ENCODE measurements at regions of chr15 and their contacts with region 1.

Region 1: DNA sequence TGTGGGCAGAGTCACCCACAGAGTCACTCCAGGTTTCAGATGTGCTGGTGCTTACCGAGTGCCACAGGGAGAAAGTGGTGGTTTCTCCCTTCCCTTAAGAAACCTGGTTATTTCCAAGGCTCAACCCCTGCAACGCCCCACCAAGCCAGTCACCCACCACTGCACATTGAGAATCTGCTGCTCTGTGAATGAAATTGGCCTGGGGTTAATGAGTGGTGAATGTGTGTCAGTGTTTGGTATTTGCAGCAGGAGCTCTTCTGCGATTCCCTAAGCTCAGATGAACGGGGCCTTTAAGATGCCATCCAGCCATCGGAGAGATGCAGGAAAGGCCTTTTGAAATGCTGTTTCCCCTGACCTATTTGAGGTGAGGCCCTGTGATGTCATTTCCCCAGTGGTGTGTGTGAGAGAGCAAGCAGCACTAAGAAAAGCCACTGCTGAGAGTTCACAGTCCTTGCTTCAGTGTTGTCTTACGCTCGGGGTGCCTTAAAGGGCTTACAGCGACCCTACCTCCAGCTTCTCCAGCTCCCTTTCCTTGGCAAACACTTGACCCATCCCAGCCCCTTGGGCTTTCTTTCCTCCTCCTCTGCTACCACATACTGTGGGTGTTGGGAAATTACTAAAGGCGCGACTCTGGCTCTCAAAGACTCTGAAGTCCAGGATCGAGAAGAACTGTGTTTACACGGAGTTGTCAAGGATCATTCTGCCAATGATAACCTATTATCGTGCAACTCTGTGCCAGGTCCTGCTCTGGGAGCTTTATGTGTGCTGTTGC is 68.9 kb downstream of the SMAD3 start:
- DNase-seq: peak; percentile 86
- ATAC-seq: peak; percentile 97
- H3K4me3 Mint-ChIP-seq: peak overlapping the region; percentile 78
- H3K27ac Mint-ChIP-seq: peak overlapping the region; percentile 97
- H3K4me1 Mint-ChIP-seq: peaks cover 90% of the 10 kb centered on the region
- H3K27me3 Mint-ChIP-seq: no peaks in the 10 kb centered on the region

Region 2: GRCh38 chr15:67085818-67086636 is 48.2 kb before region 1 on chr15:
- CTCF ChIA-PET with region 1: no interaction called
- POLR2A ChIA-PET with region 1: interaction called, 10 read pairs
- DNase-seq: peak; percentile 58
- ATAC-seq: peak; percentile 59
- H3K4me3 Mint-ChIP-seq: peak overlapping the region; percentile 49
- H3K27ac Mint-ChIP-seq: peak overlapping the region; percentile 74
- H3K4me1 Mint-ChIP-seq: peaks cover 98% of the 10 kb centered on the region
- H3K27me3 Mint-ChIP-seq: peaks cover 2% of the 10 kb centered on the region

Region 3: GRCh38 chr15:67096546-67097294 is 37.5 kb before region 1 on chr15:
- CTCF ChIA-PET with region 1: interaction called, 6 read pairs
- POLR2A ChIA-PET with region 1: interaction called, 23 read pairs
- DNase-seq: no peak
- ATAC-seq: no peak
- H3K4me3 Mint-ChIP-seq: no peak overlapping the region
- H3K27ac Mint-ChIP-seq: peak overlapping the region; percentile 54
- H3K4me1 Mint-ChIP-seq: peaks cover 82% of the 10 kb centered on the region
- H3K27me3 Mint-ChIP-seq: no peaks in the 10 kb centered on the region

Region 4: DNA sequence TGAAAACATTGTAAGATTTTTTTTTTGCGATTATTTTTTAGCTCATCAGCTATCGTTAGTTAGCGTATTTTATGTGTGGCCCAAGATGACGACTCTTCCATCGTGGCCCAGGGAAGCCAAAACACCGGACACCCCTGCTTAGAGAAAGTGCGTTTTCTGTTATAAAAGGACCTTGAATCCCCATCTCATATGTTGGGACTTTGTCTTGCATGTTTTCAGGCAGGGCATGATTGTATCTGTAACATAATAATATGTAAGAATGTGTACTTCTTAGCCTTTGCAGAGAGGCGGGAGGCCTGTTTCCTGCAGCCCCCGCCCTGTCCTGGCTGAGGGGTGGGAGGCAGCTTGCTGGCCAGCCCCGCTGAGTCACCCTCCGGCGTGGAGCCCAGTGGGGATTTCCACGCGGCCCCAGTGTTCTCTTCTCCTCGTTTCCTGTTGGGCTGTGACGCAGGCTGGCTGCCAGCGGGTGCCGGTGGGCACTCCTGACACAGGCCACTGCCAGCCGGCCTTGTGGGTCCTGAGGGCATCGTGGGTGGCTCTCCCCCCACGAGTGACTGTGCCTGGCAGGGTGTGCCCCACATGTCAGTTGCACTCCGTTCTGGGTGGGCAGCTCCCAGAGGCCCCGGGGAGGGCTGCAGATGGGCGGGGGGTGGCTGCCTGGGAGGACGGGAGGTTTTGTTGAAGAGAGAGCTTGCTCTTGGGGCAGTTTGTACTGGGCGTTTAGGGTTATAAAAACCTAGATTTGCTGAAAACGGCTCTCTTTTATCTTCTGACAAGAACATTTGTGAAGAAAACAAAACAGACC is 13.2 kb before region 1 on chr15:
- CTCF ChIA-PET with region 1: interaction called, 9 read pairs
- POLR2A ChIA-PET with region 1: interaction called, 28 read pairs
- DNase-seq: peak; percentile 82
- ATAC-seq: peak; percentile 93
- H3K4me3 Mint-ChIP-seq: peak overlapping the region; percentile 58
- H3K27ac Mint-ChIP-seq: peak overlapping the region; percentile 95
- H3K4me1 Mint-ChIP-seq: peaks cover 85% of the 10 kb centered on the region
- H3K27me3 Mint-ChIP-seq: no peaks in the 10 kb centered on the region

Region 5: GRCh38 chr15:67150028-67150860 is 16.0 kb after region 1 on chr15:
- CTCF ChIA-PET with region 1: interaction called, 6 read pairs
- POLR2A ChIA-PET with region 1: interaction called, 17 read pairs
- DNase-seq: peak; percentile 36
- ATAC-seq: peak; percentile 47
- H3K4me3 Mint-ChIP-seq: peak overlapping the region; percentile 55
- H3K27ac Mint-ChIP-seq: peak overlapping the region; percentile 35
- H3K4me1 Mint-ChIP-seq: peaks cover 72% of the 10 kb centered on the region
- H3K27me3 Mint-ChIP-seq: no peaks in the 10 kb centered on the region

Measured in activated CD8-positive, alpha-beta T cell treated with anti-CD3 and anti-CD28 coated beads, Interleukin-2, amount 10 ng/mL, durations not matched to agents 7 days and 5 days (primary cell).